Heart right ventricle (tissue), 16 donors: ENCODE measurements at regions of chr18 and their contacts with region 1.

Region 1: GRCh38 chr18:48771641-48772375 is 179.0 kb downstream of the SMAD7 start:
- DNase-seq: peak; percentile 47 to 68
- ATAC-seq: peak; percentile 53 to 80 (median 64)
- H3K4me3 ChIP-seq: no peak overlapping the region
- H3K27ac ChIP-seq: peak overlapping the region; percentile 62 to 90 (median 77)
- H3K4me1 ChIP-seq: peaks cover 13 to 86% (median 48%) of the 10 kb centered on the region in 9 donors
- H3K27me3 ChIP-seq: no peaks in the 10 kb centered on the region
- CTCF ChIP-seq: no peak

Region 2: DNA sequence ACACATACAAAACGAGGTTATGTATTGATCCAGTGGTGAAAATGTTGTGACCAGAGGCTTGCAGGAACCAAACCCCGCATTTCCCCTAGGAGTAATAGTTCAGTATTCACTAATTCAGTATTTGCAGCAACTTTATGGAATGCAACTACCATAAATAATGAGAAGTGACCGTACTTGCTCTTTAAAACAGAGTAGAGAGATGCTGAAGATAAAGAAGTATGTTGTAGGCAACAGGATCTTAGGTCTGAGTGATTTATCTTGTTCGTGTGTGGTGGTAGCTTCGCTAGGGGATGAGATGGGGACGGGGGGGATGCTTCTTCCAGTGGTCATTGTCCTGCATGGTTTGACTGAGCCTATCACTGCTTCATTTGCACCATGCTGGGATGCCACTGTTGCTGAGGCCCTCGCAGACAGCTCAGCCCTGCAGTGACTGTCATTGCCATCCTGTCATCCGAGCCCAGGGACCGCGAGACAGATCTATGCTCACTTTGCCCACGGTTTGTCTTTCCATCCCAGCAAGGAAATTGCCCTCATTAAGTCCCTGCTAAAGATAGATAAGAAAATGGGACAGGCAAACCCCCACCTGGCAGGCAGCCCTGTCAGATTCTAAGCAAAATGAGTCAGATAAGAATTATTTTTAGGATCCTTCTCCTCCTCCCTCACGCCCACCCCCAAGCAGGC is 51.7 kb before region 1 on chr18:
- intact Hi-C with region 1: loop called in 2 of 10 experiments (anchors 5 to 10 kb)
- DNase-seq: no peak
- ATAC-seq: no peak
- H3K4me3 ChIP-seq: no peak overlapping the region
- H3K27ac ChIP-seq: no peak overlapping the region
- H3K4me1 ChIP-seq: peaks cover 0 to 39% (median 17%) of the 10 kb centered on the region in 9 donors
- H3K27me3 ChIP-seq: no peaks in the 10 kb centered on the region
- CTCF ChIP-seq: no peak

Region 3: DNA sequence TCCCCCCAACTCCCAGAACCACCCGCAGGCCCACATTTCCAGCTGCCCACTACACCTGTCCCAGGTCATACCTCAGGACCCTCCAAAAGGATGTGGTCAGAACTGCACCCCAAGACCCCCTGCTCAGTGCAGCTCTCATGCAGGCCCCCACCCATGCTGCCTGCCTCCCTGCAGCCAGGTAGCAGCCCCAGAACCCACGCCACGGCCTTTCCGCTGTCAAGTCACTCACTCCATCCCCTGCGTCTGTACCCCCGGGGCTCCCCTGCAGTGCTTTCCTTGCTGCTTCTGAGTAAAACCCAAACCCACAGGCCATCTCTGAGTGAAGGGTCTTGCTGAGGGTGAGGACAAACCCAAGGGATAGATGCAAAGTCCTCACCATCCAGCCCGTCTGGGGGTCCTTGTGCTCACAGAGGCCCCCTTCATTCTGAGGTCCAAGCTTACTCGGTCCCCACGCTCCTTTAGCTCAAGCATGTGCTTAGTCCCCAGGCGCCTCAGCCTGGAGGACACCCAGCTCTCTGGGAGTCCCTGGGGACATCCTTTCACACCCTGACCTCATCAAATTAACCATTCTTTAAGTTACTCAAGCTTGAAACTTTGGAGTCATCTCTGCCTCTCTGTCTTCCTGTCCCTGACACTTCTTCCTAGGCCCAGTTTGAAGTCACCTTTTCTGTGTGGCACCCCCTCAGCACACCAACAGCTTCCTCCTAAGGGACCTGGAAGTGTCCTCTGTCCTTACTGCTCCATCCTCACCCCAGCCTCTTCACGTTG is 48.9 kb after region 1 on chr18:
- intact Hi-C with region 1: no loop called
- DNase-seq: peak in 1 of 2 donors; percentile 2
- ATAC-seq: no peak
- H3K4me3 ChIP-seq: no peak overlapping the region
- H3K27ac ChIP-seq: no peak overlapping the region
- H3K4me1 ChIP-seq: peaks cover under 1 to 36% (median 19%) of the 10 kb centered on the region in 9 donors
- H3K27me3 ChIP-seq: no peaks in the 10 kb centered on the region
- CTCF ChIP-seq: no peak